ENCODE measurements at regions of chr6 and their contacts with region 1.

Region 1: GRCh38 chr6:158191761-158192160 is 23.6 kb downstream of the GTF2H5 start:
- DNase-seq: no peak
- H3K4me3 ChIP-seq: no peak overlapping the region
- H3K27ac ChIP-seq: no peak overlapping the region
- H3K4me1 ChIP-seq: no peaks in the 10 kb centered on the region
- H3K27me3 ChIP-seq: no peaks in the 10 kb centered on the region
- CTCF ChIP-seq: no peak
- POLR2A ChIP-seq: no peak

Region 2: GRCh38 chr6:158174514-158174913 is 17.2 kb before region 1 on chr6:
- CTCF ChIA-PET with region 1: no interaction called
- POLR2A ChIA-PET with region 1: no interaction called
- dilution Hi-C with region 1: no loop called
- intact Hi-C with region 1: loop called (anchors 2 kb)
- DNase-seq: peak; percentile 35
- H3K4me3 ChIP-seq: no peak overlapping the region
- H3K27ac ChIP-seq: no peak overlapping the region
- H3K4me1 ChIP-seq: no peaks in the 10 kb centered on the region
- H3K27me3 ChIP-seq: no peaks in the 10 kb centered on the region
- CTCF ChIP-seq: no peak
- POLR2A ChIP-seq: no peak